PC-9 (cell line): ENCODE measurements at regions of chr2 and their contacts with region 1.

Region 1: GRCh38 chr2:202299712-202300111 is 34.1 kb downstream of the NOP58 start:
- DNase-seq: no peak
- H3K4me3 ChIP-seq: no peak overlapping the region
- H3K27ac ChIP-seq: no peak overlapping the region
- H3K4me1 ChIP-seq: no peaks in the 10 kb centered on the region
- H3K27me3 ChIP-seq: no peaks in the 10 kb centered on the region
- CTCF ChIP-seq: no peak

Region 2: GRCh38 chr2:202278944-202279343 is 20.8 kb before region 1 on chr2:
- CTCF ChIA-PET with region 1: no interaction called
- POLR2A ChIA-PET with region 1: interaction called, 11 read pairs
- intact Hi-C with region 1: no loop called
- DNase-seq: peak in 1 of 2 experiments; percentile 44
- H3K4me3 ChIP-seq: no peak overlapping the region
- H3K27ac ChIP-seq: peak overlapping the region; percentile 77
- H3K4me1 ChIP-seq: peaks cover 17% of the 10 kb centered on the region
- H3K27me3 ChIP-seq: no peaks in the 10 kb centered on the region
- CTCF ChIP-seq: 0 out of 2 replicates have a peak, but pooled peaks have one; percentile 41